ENCODE measurements at regions of chr4 and their contacts with region 1.

Region 1: DNA sequence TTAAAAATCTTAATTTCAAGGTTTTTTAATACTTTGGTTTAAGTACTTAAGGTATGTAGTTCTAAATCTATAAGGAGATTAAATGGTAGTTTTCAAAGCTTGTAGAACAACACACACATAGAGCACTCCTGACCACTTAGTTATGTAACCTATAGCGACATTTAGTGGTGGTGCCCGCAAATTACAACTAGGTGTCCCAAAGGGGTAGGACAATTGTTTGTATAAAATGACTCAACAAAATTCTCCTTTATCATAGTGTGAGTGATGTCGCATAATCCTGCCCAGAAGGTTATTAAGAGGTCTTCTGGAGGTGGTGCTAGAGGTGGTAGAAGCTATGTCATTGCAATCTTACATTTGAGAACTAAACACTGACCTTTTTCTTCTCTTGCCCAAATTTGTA is 373.0 kb upstream of the RASGEF1B start:
- DNase-seq: peak; percentile 64 to 93 (median 82)
- H3K4me3 ChIP-seq: no peak overlapping the region
- H3K27ac ChIP-seq: no peak overlapping the region
- H3K4me1 ChIP-seq: peaks cover 0 to 7% of the 10 kb centered on the region in 2 donors
- H3K27me3 ChIP-seq: no peaks in the 10 kb centered on the region
- CTCF ChIP-seq: peak; percentile 71 to 86 (median 77)
- POLR2A ChIP-seq: no peak

Region 2: GRCh38 chr4:81460191-81460701 is 384.5 kb before region 1 on chr4:
- intact Hi-C with region 1: loop called (anchors 5 to 10 kb)
- DNase-seq: no peak
- H3K4me3 ChIP-seq: no peak overlapping the region
- H3K27ac ChIP-seq: no peak overlapping the region
- H3K4me1 ChIP-seq: peaks cover 0 to 5% of the 10 kb centered on the region in 2 donors
- H3K27me3 ChIP-seq: no peaks in the 10 kb centered on the region
- CTCF ChIP-seq: no peak
- POLR2A ChIP-seq: no peak

Region 3: GRCh38 chr4:81466841-81467671 is 377.7 kb before region 1 on chr4:
- intact Hi-C with region 1: loop called (anchors 5 to 10 kb)
- DNase-seq: peak; percentile 44 to 78 (median 69)
- H3K4me3 ChIP-seq: no peak overlapping the region
- H3K27ac ChIP-seq: no peak overlapping the region
- H3K4me1 ChIP-seq: peaks cover 0 to 23% of the 10 kb centered on the region in 2 donors
- H3K27me3 ChIP-seq: no peaks in the 10 kb centered on the region
- CTCF ChIP-seq: peak; percentile 81 to 96 (median 93)
- POLR2A ChIP-seq: no peak

Measured in adrenal gland (tissue), 19 donors.